Gastrocnemius medialis (tissue), 4 donors: ENCODE measurements at regions of chr3 and their contacts with region 1.

Region 1: GRCh38 chr3:157081681-157082210 is 78.2 kb downstream of the CCNL1 start:
- DNase-seq: peak; percentile 73 to 81
- ATAC-seq: peak; percentile 45 to 60
- H3K4me3 ChIP-seq: no peak overlapping the region
- H3K27ac ChIP-seq: peak overlapping the region; percentile 20 to 75 (median 56)
- H3K4me1 ChIP-seq: peaks cover 18 to 28% of the 10 kb centered on the region in 2 donors
- H3K27me3 ChIP-seq: no peaks in the 10 kb centered on the region
- CTCF ChIP-seq: peak; percentile 91 to 98 (median 96)
- POLR2A ChIP-seq: peak; percentile 36

Region 2: GRCh38 chr3:156151824-156152428 is 929.8 kb before region 1 on chr3:
- in situ Hi-C with region 1: loop called in 2 of 4 experiments (anchors 10 to 25 kb)
- intact Hi-C with region 1: loop called (anchors 2 kb)
- DNase-seq: peak in 1 of 2 donors; percentile 28
- ATAC-seq: no peak
- H3K4me3 ChIP-seq: no peak overlapping the region
- H3K27ac ChIP-seq: no peak overlapping the region
- H3K4me1 ChIP-seq: peaks cover 9 to 20% of the 10 kb centered on the region in 2 donors
- H3K27me3 ChIP-seq: no peaks in the 10 kb centered on the region
- CTCF ChIP-seq: peak in 4 of 5 experiments; percentile 31 to 57 (median 46)
- POLR2A ChIP-seq: no peak

Region 3: DNA sequence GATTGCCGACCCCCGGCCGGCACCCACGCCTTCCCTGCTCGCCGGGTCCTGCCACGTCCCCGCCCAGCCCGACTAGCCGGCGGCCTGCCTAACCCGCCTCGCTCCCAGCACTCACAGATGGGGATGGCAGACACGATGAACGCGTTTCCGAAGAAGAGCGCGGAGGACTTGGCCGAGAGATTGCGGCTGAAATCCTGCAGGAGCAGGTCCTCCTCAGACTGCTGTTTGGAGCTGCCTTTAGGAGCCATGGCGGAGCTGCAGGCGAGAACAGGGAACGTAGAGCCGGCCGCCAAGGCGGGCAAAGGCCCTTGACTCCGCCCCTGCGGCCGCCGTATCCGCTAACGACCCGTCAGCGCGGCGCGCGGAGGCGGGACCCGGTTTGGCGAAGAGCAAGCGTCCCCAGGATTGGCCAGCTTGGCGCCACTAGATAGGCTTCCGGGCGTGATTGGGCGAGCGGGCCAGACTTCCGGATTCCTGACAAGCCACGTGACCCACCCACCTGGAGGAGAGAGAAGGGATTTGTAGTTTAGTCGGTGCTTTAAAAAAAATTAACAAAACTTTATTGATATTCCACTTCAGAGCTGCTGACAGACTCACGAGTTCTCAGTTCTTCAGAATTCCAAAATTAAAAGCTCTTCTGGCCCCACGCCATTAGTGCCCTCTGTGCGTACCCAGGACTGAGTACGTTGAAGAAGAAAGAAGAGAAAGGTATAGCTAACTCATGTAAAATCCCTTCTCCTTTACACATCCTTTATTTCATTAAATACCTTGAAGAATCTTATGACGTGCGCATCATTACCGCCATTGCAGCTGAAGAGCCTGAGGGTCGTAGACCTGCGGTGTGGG is 526.7 kb before region 1 on chr3 and contains the start of gene SSR3:
- in situ Hi-C with region 1: loop called in 2 of 4 experiments (anchors 10 kb)
- intact Hi-C with region 1: loop called (anchors 5 kb)
- DNase-seq: peak; percentile 99
- ATAC-seq: peak; percentile 98
- H3K4me3 ChIP-seq: peak within 1 kb of the TSS; percentile 84 to 100 (median 88)
- H3K27ac ChIP-seq: peak within 1 kb of the TSS; percentile 85 to 97 (median 90)
- H3K4me1 ChIP-seq: peaks cover 22 to 27% of the 10 kb centered on the region in 2 donors
- H3K27me3 ChIP-seq: no peaks in the 10 kb centered on the region
- CTCF ChIP-seq: peak; percentile 34 to 65 (median 63)
- POLR2A ChIP-seq: peak; percentile 71 to 78
- total RNA-seq, gene SSR3: 50.9 to 91.5 (median 65.3) TPM

Region 4: DNA sequence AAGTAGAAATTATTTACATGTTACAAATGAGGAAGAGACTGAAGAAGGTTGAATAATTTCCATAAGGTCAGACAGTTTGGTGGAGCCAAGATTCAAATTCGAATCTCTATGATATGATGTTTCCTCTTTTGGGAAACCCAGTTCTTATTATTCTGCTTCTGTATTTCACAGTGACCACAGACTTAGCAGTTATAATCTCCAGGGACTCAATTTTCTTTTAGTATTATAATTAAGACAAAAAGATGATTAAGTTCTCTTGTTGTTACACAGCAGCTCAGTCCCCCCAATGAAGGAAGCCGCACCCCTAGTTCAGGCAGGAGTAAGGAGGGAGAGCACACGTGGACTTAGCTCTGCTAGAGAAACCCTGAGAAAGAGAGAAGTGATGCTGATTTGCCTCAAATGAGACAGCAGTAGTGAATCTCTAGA is 52.4 kb before region 1 on chr3:
- in situ Hi-C with region 1: no loop called
- intact Hi-C with region 1: no loop called
- DNase-seq: no peak
- ATAC-seq: no peak
- H3K4me3 ChIP-seq: no peak overlapping the region
- H3K27ac ChIP-seq: no peak overlapping the region
- H3K4me1 ChIP-seq: no peaks in the 10 kb centered on the region
- H3K27me3 ChIP-seq: no peaks in the 10 kb centered on the region
- CTCF ChIP-seq: no peak
- POLR2A ChIP-seq: no peak

Region 5: DNA sequence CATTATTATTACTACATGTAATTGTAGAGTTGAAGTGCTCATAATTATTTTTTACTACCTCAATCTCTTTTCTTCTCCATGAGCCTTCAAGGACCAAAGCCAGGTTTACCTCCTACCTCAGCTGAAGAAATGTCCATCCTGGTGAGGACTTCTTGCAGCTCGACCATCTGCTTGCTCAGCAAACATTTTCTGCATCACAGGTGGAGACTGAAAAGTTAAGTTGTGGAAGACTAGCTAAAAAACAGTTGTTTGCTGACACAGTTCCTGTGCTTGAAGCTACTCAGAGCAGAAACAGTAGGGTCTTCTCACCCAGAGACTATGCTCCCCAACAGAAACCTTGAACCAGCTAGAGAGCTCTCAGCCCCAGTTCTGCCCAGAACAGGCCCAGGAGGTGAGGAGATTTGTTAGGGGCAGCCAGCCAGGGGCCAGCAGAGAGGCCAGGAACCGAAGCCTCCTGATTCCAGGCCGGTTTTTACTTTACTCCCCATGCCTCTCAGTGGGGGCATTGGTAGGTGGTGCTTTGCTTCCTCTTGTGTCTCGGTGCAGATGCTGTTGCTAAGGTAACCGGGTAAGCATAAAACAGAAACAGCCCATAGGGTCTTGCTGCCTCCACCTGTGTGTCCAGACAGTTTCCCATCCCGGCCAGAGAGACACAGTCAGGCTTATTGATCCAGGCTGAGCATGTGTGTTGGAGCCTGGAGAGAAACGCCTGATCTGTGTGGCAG is 23.3 kb after region 1 on chr3:
- in situ Hi-C with region 1: no loop called
- intact Hi-C with region 1: no loop called
- DNase-seq: no peak
- ATAC-seq: no peak
- H3K4me3 ChIP-seq: no peak overlapping the region
- H3K27ac ChIP-seq: no peak overlapping the region
- H3K4me1 ChIP-seq: peaks cover 0 to 11% of the 10 kb centered on the region in 2 donors
- H3K27me3 ChIP-seq: no peaks in the 10 kb centered on the region
- CTCF ChIP-seq: no peak
- POLR2A ChIP-seq: no peak

Region 6: GRCh38 chr3:157130467-157131251 is 48.9 kb after region 1 on chr3:
- in situ Hi-C with region 1: loop called in 3 of 4 experiments (anchors 5 to 10 kb)
- intact Hi-C with region 1: no loop called
- DNase-seq: peak; percentile 45 to 63
- ATAC-seq: peak; percentile 25 to 53
- H3K4me3 ChIP-seq: peak overlapping the region in 3 of 4 donors; percentile 25 to 34 (median 34)
- H3K27ac ChIP-seq: peak overlapping the region; percentile 70 to 86 (median 72)
- H3K4me1 ChIP-seq: peaks cover 53 to 78% of the 10 kb centered on the region in 2 donors
- H3K27me3 ChIP-seq: no peaks in the 10 kb centered on the region
- CTCF ChIP-seq: peak; percentile 48 to 73 (median 66)
- POLR2A ChIP-seq: peak in 1 of 2 donors; percentile 14

Region 7: DNA sequence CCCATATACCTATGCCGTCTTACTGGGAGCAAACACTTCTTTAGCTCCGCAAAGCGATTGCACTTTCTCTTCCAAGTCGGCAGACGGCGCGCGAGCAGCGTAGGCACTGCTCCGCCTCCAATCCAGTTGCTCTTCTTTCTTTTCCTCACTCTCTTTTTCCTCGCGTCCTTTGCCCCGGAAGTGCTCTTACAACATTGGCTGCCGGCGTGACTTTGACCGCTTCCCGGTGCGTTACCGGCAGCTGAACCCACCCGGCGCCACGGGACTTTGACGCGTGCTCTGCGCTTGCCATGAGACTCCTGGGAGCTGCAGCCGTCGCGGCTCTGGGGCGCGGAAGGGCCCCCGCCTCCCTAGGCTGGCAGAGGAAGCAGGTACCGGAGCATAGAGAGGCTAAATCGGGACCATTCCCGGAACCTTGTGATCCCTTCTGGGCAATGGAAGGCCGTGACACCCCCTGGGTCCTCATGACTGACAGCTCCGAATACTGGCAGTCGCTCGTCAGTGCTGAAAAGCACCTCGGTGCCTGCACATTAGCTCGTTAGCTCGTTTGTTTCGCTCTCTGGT is 1562.7 kb after region 1 on chr3 and contains the start of gene GFM1:
- in situ Hi-C with region 1: no loop called
- intact Hi-C with region 1: loop called (anchors 5 kb)
- DNase-seq: peak; percentile 91 to 96
- ATAC-seq: peak; percentile 100
- H3K4me3 ChIP-seq: peak within 1 kb of the TSS; percentile 75 to 91 (median 77)
- H3K27ac ChIP-seq: peak within 1 kb of the TSS; percentile 90 to 96 (median 94)
- H3K4me1 ChIP-seq: peaks cover 25 to 39% of the 10 kb centered on the region in 2 donors
- H3K27me3 ChIP-seq: no peaks in the 10 kb centered on the region
- CTCF ChIP-seq: peak; percentile 62 to 88 (median 66)
- POLR2A ChIP-seq: peak; percentile 76 to 84
- total RNA-seq, gene GFM1: 52.6 to 84.4 (median 76.2) TPM